MCF 10A (cell line): ENCODE measurements at regions of chr7 and their contacts with region 1.

Region 1: DNA sequence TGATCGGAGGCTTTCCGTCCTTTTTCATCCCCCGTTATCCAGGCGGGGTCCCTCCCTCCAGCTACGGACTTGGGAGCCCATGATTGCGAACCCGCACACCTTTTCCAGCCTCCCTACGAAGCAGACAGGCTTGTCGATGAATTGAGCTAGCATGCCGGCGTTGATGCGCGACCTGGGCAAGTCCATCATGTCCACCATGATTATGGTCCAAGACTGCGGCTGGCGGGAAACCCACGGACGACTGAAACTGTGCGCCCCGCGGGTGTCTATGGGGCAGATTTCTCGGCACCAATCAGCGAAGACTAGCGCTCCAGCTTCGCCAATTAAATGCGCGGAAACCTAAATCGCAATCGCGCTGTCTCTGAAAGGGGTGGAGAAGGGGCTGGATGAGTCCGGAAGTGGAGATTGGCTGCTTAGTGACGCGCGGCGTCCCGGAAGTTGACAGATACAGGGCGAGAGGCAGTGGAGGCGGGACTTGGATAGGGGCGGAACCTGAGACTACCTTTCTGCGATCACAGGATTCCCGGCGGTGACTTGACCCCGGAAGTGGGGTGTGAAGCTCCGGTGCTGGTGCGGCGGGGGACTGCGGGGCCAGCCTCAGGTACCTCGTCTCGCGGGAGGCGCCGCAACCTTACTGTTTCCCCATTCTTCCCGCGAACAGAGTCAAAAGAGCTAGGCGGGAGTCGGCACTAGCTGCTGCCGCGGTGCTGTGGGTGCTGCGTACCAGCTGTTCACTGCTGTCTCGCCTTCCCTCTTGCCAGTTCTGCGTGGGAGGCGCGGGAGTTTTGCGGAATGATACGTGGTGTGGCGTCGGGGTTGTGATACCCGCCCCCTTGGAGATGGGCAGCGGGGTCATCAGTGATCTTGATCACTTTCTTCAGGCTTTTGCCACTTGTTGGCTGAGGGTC is at the start of gene UMAD1:
- DNase-seq: peak; percentile 99
- H3K4me3 Mint-ChIP-seq: peak within 1 kb of the TSS; percentile 96
- H3K27ac Mint-ChIP-seq: peak within 1 kb of the TSS; percentile 97
- H3K4me1 Mint-ChIP-seq: peaks cover 21% of the 10 kb centered on the region
- H3K27me3 Mint-ChIP-seq: no peaks in the 10 kb centered on the region
- CTCF ChIP-seq: no peak
- total RNA-seq, gene UMAD1: 7.1 and 11.1 TPM in 2 replicates

Region 2: DNA sequence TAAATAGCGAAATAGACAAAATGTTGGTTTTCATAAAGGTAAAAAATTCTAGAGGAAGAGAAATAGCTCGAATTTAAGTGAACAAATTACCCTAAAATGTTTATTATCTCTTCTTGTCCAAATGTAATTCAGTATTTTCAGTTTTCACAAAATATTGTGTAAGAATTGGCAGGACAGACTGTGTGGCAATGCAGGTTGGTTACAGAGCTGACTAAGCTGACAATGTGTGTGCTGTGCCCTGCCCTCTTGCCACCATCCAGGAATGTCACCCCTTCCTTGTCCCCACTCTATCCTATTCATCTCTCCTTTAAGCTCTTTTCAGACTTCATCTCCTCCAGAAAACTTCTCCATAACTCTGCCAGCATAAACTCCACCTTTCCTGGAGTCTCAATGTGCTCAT is 150.9 kb before region 1 on chr7:
- CTCF ChIA-PET with region 1: no interaction called
- POLR2A ChIA-PET with region 1: interaction called, 12 read pairs
- intact Hi-C with region 1: no loop called
- DNase-seq: peak; percentile 67
- H3K4me3 Mint-ChIP-seq: peak overlapping the region; percentile 1
- H3K27ac Mint-ChIP-seq: peak overlapping the region; percentile 71
- H3K4me1 Mint-ChIP-seq: peaks cover 27% of the 10 kb centered on the region
- H3K27me3 Mint-ChIP-seq: no peaks in the 10 kb centered on the region
- CTCF ChIP-seq: no peak

Region 3: DNA sequence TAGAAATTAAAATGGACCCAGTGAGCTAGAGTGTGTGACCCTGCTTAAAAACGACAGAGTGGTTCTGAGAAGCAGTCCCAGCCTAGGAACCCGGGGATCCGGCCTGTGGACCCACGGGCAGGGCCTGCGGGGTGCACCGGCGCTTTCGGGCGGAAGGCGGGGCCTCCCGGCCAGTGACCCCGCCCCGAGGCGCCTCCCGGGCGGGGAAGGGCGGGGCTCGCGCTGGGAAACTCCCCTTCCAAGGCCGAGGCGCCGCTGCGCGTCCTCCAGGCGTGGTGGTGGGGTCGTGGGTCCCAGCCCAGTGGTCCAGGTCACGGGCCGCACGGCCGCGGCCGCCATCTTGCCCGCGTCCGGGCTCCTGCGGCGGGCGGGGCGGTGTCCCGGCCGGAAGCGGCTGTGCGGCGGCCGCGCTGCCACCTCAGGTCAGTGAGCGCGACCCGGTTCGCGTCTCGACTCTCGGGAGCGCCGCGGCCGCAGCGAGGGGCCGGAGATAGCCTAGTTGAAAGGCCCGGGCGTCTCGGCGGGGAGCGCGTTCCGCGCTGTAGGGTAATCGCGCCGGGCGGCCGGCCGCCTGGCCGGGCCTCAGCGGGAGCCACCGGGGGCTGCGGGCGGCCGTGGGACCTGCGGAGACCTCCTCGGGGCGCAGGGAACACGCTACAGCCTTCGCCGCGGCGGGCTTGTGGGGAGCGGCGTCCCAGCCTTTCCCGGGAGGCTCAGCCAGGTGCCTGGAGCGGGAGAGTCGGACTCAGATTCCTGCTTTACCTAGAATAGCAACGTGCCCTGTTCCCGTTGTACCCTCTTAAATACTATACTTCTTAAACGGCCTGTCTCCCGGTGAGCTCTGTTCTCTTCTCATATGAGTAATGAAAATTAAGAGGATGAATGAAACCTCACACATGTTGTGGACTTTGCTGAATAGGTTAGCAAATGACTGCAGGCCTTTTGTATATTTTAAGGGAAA is 73.5 kb before region 1 on chr7 and contains the start of gene MIOS:
- CTCF ChIA-PET with region 1: no interaction called
- POLR2A ChIA-PET with region 1: interaction called, 39 read pairs
- intact Hi-C with region 1: no loop called
- DNase-seq: peak; percentile 81
- H3K4me3 Mint-ChIP-seq: no peak within 1 kb of the TSS
- H3K27ac Mint-ChIP-seq: peak within 1 kb of the TSS; percentile 72
- H3K4me1 Mint-ChIP-seq: peaks cover 17% of the 10 kb centered on the region
- H3K27me3 Mint-ChIP-seq: no peaks in the 10 kb centered on the region
- CTCF ChIP-seq: no peak
- total RNA-seq, gene MIOS: 43.5 and 65.4 TPM in 2 replicates

Region 4: GRCh38 chr7:7585253-7585928 is 55.1 kb before region 1 on chr7:
- CTCF ChIA-PET with region 1: no interaction called
- POLR2A ChIA-PET with region 1: no interaction called
- intact Hi-C with region 1: no loop called
- DNase-seq: no peak
- H3K4me3 Mint-ChIP-seq: no peak overlapping the region
- H3K27ac Mint-ChIP-seq: no peak overlapping the region
- H3K4me1 Mint-ChIP-seq: peaks cover 9% of the 10 kb centered on the region
- H3K27me3 Mint-ChIP-seq: no peaks in the 10 kb centered on the region
- CTCF ChIP-seq: no peak

Region 5: DNA sequence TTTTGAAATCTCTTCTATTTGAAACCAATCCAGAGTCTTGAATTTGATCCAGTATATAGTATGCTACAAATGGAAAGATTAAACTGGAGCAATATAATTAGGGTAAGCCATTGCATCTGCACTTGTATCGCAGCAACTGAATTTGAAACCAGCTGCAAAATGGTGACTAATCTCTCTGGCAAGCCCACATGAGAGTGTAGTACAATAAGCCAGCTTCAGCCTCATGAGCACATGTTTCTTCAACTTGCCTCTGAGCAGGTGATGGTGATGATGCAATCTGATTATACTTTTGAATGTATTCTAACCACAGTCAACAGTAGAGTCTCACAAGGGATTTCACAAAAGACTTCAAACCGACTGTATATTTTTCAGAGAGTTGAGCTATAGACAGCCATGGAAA is 78.8 kb after region 1 on chr7:
- CTCF ChIA-PET with region 1: no interaction called
- POLR2A ChIA-PET with region 1: interaction called, 24 read pairs
- intact Hi-C with region 1: no loop called
- DNase-seq: peak; percentile 96
- H3K4me3 Mint-ChIP-seq: peak overlapping the region; percentile 55
- H3K27ac Mint-ChIP-seq: peak overlapping the region; percentile 90
- H3K4me1 Mint-ChIP-seq: peaks cover 18% of the 10 kb centered on the region
- H3K27me3 Mint-ChIP-seq: no peaks in the 10 kb centered on the region
- CTCF ChIP-seq: no peak

Region 6: GRCh38 chr7:7932580-7932979 is 292.1 kb after region 1 on chr7:
- CTCF ChIA-PET with region 1: no interaction called
- POLR2A ChIA-PET with region 1: no interaction called
- intact Hi-C with region 1: no loop called
- DNase-seq: peak; percentile 26
- H3K4me3 Mint-ChIP-seq: no peak overlapping the region
- H3K27ac Mint-ChIP-seq: no peak overlapping the region
- H3K4me1 Mint-ChIP-seq: no peaks in the 10 kb centered on the region
- H3K27me3 Mint-ChIP-seq: no peaks in the 10 kb centered on the region
- CTCF ChIP-seq: no peak

Region 7: DNA sequence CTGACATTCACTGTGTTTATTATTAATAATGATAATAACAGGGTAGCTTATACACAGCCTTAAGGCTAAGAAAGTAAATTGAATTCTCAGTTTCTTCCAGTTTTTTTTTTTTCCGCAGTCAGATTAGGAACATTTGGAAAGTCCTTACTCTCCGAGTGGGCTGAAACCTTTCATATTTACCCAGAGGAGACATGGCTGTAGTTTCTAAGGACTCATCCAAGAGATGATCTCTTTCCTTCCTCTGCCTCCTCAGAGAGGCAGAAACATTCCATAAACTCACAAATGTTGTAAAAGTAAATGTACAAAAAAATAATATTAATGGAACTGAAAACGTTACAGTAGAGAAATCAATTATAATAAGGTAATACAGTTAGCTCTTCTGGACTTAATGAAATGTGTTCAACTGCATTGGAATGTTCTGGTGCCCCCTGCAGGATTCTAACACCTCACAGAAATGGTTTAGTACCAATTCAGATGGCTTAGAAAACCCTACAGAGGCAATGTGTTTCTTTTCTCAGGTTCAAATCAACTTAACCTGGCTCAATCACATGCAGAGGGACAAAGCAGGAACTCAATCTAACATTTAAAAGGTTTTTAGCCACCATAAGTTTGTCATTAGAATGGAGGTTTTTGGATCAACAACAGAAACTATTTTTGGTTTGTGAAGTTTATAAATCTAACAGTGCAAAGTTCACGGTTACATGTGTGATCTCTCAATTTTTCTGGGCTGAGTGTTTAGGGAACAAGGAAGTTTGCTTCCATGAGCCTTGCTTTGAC is 549.8 kb after region 1 on chr7:
- CTCF ChIA-PET with region 1: no interaction called
- POLR2A ChIA-PET with region 1: no interaction called
- intact Hi-C with region 1: loop called (anchors 1 kb)
- DNase-seq: peak; percentile 59
- H3K4me3 Mint-ChIP-seq: no peak overlapping the region
- H3K27ac Mint-ChIP-seq: no peak overlapping the region
- H3K4me1 Mint-ChIP-seq: no peaks in the 10 kb centered on the region
- H3K27me3 Mint-ChIP-seq: no peaks in the 10 kb centered on the region
- CTCF ChIP-seq: peak; percentile 39